HepG2 (cell line): ENCODE measurements at regions of chr9 and their contacts with region 1.

Region 1: GRCh38 chr9:113436728-113437471 is 26.4 kb downstream of the C9orf43 start:
- DNase-seq: no peak
- ATAC-seq: peak; percentile 48; the same call in 1 of the 3 replicates
- H3K4me3 ChIP-seq: no peak overlapping the region
- H3K27ac ChIP-seq: no peak overlapping the region
- H3K4me1 ChIP-seq: no peaks in the 10 kb centered on the region
- H3K27me3 ChIP-seq: no peaks in the 10 kb centered on the region; a peak in 1 of 5 replicates
- CTCF ChIP-seq: no peak
- EP300 ChIP-seq: no peak
- POLR2A ChIP-seq: no peak
- RAD21 ChIP-seq: no peak

Region 2: DNA sequence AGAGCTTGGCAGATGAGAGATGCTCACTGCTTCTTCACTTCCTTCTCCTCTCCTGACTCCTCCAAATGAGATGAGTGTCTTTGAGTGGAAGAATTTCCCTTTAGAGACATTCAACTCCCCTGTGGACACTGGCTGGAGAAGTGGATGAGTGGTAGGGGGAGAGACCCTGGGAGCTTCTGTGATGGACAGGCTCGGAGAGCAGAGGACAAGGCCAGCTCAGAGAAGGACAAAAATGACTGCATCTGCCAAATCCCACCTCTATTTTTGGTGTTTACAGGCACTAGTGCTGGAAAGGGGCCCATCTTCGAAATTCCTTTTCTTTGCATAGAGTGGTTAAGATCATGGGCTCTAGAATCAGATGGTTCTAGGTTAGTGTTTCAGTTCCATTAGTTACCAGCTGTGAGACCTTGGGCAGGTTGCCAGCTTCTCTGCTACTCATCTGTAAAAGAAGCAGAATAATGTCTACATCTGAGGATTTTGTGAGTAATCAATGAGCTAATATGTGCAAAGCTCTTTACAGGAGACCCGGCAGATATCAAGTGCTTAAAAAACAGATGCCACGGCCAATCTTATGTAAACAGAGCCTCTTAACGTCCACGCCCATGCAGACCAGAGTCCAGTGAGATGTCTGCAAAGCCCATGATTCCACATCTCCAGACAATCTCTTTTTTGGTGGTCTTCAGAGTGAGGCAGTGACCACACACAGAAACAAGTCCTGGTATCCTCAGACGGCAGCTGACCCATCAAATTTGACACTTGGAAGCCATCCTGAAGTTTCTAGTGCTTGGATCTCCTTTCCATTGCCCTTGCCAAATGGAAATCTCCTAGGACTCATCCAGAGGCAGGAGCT is 704.9 kb after region 1 on chr9:
- CTCF ChIA-PET with region 1: no interaction called
- POLR2A ChIA-PET with region 1: no interaction called
- in situ Hi-C with region 1: no loop called
- intact Hi-C with region 1: loop called (anchors 5 kb)
- DNase-seq: peak; percentile 82
- ATAC-seq: peak; percentile 64
- H3K4me3 ChIP-seq: peak overlapping the region in 1 of 3 experiments; percentile 39; a peak in 2 of 6 replicates
- H3K27ac ChIP-seq: peak overlapping the region; percentile 6
- H3K4me1 ChIP-seq: peaks cover 78% of the 10 kb centered on the region
- H3K27me3 ChIP-seq: no peaks in the 10 kb centered on the region; a peak in 1 of 5 replicates
- CTCF ChIP-seq: no peak
- EP300 ChIP-seq: peak in 1 of 2 experiments; percentile 74; a peak in 2 of 4 replicates
- POLR2A ChIP-seq: no peak
- RAD21 ChIP-seq: no peak